ENCODE measurements at regions of chr3 and their contacts with region 1.

Region 1: GRCh38 chr3:150870396-150870795 is 34.8 kb downstream of the MINDY4B start:
- DNase-seq: no peak
- H3K4me3 ChIP-seq: no peak overlapping the region
- CTCF ChIP-seq: no peak
- POLR2A ChIP-seq: no peak

Region 2: DNA sequence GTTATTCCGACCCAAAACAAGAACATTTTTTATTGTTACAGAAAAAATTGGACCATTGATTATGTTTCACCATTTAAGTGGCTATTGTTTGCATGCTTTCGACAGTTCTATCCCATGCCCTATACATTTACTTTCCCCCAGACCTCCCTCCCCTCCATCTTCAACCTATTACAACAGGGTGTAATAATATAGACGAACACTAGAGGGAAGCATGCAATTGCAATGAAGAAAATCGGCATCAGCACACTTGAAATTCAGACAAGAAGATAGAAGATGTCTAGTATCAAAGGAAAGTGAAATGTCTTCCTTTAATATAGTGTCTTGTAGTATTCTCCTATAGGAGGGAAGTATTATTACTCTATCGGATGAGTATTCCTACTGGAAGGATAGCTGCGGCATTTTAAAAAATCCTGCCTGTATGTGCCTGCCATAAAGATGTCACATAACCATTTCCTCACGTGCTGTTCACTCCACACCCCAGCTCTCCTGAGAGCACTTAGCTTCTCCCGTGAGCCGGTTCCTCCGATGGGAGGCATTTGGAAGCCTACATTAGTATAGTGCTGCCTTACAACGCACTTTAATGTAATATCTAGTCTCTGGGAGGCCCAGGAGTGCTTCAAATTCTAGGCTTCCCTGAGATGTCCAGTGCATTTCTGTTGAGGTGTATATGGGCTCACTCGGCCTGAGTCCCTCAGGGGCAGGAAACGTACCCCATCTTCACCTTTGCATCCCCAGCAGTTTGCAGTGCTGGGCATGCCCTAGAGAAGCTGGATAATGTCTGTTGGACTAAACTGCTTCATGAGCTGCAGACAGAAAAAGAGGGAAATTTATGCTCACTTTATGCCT is 148.9 kb before region 1 on chr3:
- intact Hi-C with region 1: loop called (anchors 2 kb)
- DNase-seq: no peak
- H3K4me3 ChIP-seq: no peak overlapping the region
- CTCF ChIP-seq: peak in 1 of 3 donors; percentile 78
- POLR2A ChIP-seq: no peak

Region 3: DNA sequence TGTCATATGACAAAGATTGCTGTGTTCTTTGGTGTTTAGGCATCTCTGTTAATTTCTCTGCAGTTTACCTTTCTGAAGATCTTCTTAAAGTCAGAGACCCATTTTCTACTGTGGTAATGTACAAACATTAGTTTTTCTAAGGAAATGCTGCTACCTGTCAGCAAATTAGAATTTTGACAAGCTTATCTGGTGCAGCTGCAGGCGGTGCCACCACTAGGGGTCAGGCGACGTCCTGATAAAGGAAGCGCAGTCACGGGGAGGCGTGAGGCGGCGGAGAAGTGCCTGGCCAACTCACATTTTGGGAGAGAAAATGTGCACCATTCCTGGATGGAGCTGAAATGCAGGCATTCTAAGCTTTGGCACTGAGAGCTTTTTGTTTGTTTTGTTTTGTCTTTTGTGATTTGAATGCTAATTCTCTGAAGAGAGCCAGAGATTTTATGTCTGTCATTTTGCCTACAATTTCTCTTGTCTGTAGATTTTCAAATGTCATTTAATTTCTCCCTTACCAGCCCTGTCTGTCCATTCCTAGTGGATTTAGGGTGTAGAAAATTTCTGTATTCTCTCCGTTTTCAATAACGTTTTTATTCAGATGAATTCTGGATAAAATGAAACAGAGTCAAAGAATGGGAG is 82.5 kb before region 1 on chr3:
- intact Hi-C with region 1: loop called (anchors 10 kb)
- DNase-seq: peak; percentile 65 to 95
- H3K4me3 ChIP-seq: no peak overlapping the region
- CTCF ChIP-seq: peak in 1 of 3 donors; percentile 71
- POLR2A ChIP-seq: no peak

Region 4: GRCh38 chr3:150899141-150899540 is 28.7 kb after region 1 on chr3:
- intact Hi-C with region 1: no loop called
- DNase-seq: no peak
- H3K4me3 ChIP-seq: no peak overlapping the region
- CTCF ChIP-seq: no peak
- POLR2A ChIP-seq: no peak

Measured in lower leg skin (tissue), 4 donors.